ENCODE measurements at regions of chr5 and their contacts with region 1.

Region 1: GRCh38 chr5:40277161-40277906 is 402.4 kb upstream of the PTGER4 start:
- DNase-seq: peak; percentile 77
- H3K4me3 Mint-ChIP-seq: peak overlapping the region; percentile 72
- H3K27ac Mint-ChIP-seq: peak overlapping the region; percentile 96
- H3K4me1 Mint-ChIP-seq: peaks cover 43% of the 10 kb centered on the region
- H3K27me3 Mint-ChIP-seq: no peaks in the 10 kb centered on the region

Region 2: GRCh38 chr5:39948867-39949468 is 328.4 kb before region 1 on chr5:
- intact Hi-C with region 1: loop called (anchors 2 kb)
- DNase-seq: peak; percentile 90
- H3K4me3 Mint-ChIP-seq: no peak overlapping the region
- H3K27ac Mint-ChIP-seq: peak overlapping the region; percentile 7
- H3K4me1 Mint-ChIP-seq: peaks cover 3% of the 10 kb centered on the region
- H3K27me3 Mint-ChIP-seq: peaks cover 2% of the 10 kb centered on the region

Region 3: DNA sequence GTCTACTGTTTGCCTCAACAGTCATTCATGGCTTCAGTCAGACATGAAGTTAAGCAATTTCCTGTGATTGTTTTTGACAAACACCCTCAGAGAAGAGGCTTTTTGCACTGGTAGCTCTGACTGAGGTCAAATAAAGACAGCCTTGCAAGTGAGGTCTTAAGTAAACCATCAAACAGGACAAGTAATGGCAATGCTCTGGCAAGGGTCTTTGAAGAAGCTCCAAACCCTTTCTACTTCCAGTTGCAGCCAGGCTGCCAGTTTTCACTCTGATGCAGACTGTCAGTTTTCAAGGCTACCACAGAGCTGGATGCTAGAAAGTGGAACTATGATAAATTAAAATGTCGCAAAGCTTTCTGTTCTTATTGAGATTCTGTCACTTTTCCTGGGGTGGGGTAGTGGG is 19.1 kb before region 1 on chr5:
- intact Hi-C with region 1: loop called (anchors 1 kb)
- DNase-seq: peak; percentile 71
- H3K4me3 Mint-ChIP-seq: peak overlapping the region; percentile 39
- H3K27ac Mint-ChIP-seq: peak overlapping the region; percentile 72
- H3K4me1 Mint-ChIP-seq: peaks cover 11% of the 10 kb centered on the region
- H3K27me3 Mint-ChIP-seq: no peaks in the 10 kb centered on the region

Region 4: GRCh38 chr5:40333459-40334244 is 56.3 kb after region 1 on chr5:
- intact Hi-C with region 1: loop called (anchors 1 kb)
- DNase-seq: peak; percentile 59
- H3K4me3 Mint-ChIP-seq: no peak overlapping the region
- H3K27ac Mint-ChIP-seq: no peak overlapping the region
- H3K4me1 Mint-ChIP-seq: peaks cover 19% of the 10 kb centered on the region
- H3K27me3 Mint-ChIP-seq: no peaks in the 10 kb centered on the region

Region 5: GRCh38 chr5:40410231-40410861 is 133.0 kb after region 1 on chr5:
- intact Hi-C with region 1: loop called (anchors 1 kb)
- DNase-seq: peak; percentile 93
- H3K4me3 Mint-ChIP-seq: peak overlapping the region; percentile 79
- H3K27ac Mint-ChIP-seq: peak overlapping the region; percentile 93
- H3K4me1 Mint-ChIP-seq: peaks cover 51% of the 10 kb centered on the region
- H3K27me3 Mint-ChIP-seq: no peaks in the 10 kb centered on the region

Region 6: GRCh38 chr5:40578501-40579451 is 301.4 kb after region 1 on chr5:
- intact Hi-C with region 1: loop called (anchors 1 kb)
- DNase-seq: peak; percentile 76
- H3K4me3 Mint-ChIP-seq: peak overlapping the region; percentile 45
- H3K27ac Mint-ChIP-seq: peak overlapping the region; percentile 93
- H3K4me1 Mint-ChIP-seq: peaks cover 27% of the 10 kb centered on the region
- H3K27me3 Mint-ChIP-seq: no peaks in the 10 kb centered on the region

Region 7: DNA sequence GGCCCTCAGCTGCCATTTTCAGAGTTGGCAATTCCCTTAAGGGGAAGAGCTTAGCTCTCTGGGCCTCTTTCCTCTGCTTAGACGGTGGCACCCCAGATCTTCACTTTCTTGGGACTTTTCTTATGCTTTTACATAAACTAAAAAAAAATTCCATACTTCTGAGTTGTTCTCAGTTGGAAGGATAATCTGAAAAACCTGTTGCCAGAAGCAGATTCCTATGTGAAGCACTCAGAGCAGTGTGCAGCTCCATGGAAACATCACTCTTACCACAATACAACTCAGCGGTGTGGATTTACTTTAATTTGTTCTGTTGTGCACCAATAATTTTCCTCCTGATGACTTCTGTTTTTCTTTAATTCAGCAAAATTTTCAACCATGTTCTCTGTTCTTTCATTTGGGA is 837.9 kb after region 1 on chr5:
- intact Hi-C with region 1: no loop called
- DNase-seq: no peak
- H3K4me3 Mint-ChIP-seq: no peak overlapping the region
- H3K27ac Mint-ChIP-seq: no peak overlapping the region
- H3K4me1 Mint-ChIP-seq: no peaks in the 10 kb centered on the region
- H3K27me3 Mint-ChIP-seq: no peaks in the 10 kb centered on the region